ENCODE measurements at regions of chr5 and their contacts with region 1.

Region 1: DNA sequence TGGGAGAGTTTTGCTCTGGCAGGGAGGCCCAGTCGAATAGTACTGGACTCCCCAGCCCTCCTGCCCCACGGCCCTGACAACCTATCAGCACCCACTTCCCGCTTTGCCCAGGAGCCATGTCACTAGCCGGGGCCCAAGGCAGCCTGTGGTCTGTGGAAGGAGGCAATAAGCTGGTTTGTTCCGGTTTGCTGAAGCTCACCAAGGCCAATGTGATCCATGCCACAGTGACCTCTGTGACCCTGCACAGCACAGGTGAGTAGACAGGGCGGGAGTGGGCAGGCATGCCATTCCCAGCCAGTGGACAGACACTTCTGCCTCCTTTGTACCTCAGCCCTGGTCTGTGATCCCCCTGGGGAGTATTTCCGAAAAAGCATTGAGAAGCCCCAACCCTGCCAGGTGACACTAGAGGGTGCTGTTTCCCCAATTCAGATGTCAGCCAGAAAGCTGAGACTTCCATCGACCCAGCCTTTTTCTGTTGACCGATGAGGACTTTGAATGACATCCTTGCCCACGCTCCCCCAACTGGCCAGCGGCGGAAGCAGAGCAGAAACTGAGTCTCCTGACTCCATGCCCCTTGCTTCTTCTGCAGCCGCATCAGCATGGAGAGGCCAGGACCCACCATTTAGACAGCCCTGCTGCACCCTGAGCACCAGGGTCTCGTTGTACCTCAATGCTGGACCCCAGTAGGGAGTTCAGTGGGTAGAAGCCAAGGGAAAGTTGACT is 9.6 kb downstream of the PCYOX1L start:
- DNase-seq: no peak
- H3K4me3 ChIP-seq: no peak overlapping the region
- H3K27ac ChIP-seq: no peak overlapping the region
- H3K27me3 ChIP-seq: no peaks in the 10 kb centered on the region
- CTCF ChIP-seq: peak; percentile 93

Region 2: GRCh38 chr5:149284501-149284900 is 82.9 kb before region 1 on chr5:
- CTCF ChIA-PET with region 1: no interaction called
- POLR2A ChIA-PET with region 1: no interaction called
- DNase-seq: no peak
- H3K4me3 ChIP-seq: no peak overlapping the region
- H3K27ac ChIP-seq: no peak overlapping the region
- H3K27me3 ChIP-seq: no peaks in the 10 kb centered on the region
- CTCF ChIP-seq: no peak

Region 3: DNA sequence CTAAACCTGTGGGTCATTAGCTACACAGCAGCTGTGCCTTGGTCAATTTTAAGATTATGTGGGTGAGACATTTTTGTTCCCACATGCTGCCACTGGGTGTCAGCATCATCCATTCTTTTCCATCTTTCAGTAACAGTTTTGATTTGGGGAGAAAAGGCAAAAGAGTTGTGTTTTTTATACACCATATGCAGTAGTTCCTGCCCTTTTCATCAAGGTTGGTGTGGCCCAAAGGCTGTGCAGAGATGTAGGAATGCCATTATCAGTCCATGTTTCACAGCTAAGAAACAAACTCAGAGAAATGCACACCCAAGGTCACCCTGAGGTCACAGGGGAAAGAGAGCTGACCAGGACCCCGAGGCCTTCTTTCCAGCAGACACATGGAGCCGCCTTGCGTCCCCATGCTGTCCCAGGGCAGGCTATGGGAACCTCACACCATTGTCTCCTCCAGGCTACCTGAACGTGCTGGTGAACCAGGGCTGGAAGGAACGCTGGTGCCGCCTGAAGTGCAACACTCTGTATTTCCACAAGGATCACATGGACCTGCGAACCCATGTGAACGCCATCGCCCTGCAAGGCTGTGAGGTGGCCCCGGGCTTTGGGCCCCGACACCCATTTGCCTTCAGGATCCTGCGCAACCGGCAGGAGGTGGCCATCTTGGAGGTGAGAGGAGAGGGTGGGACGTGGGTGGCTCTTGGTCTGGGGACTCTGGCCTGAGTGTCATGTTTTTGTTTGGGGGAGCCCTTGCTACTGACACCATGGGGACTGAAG is 49.9 kb before region 1 on chr5:
- CTCF ChIA-PET with region 1: interaction called, 90 read pairs
- POLR2A ChIA-PET with region 1: interaction called, 3 read pairs
- DNase-seq: peak; percentile 33
- H3K4me3 ChIP-seq: no peak overlapping the region
- H3K27ac ChIP-seq: no peak overlapping the region
- H3K27me3 ChIP-seq: no peaks in the 10 kb centered on the region
- CTCF ChIP-seq: peak; percentile 75

Region 4: DNA sequence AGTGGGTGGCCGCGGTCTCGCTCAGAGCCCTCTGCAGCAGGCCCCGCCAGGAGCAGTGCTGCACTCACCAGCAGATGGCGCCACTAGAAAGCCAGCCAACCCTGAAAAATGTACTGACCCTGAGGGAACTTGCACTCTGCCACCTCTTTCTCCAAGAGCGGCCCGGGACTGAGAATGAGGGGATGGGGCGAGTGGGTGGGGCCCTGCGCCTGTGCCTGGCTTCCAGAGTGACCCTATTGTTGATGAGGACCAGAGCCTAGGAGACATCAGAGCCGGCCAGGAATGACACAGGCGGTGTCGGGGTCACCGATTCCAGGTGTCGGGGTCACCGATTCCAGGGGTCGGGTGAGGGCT is 14.6 kb after region 1 on chr5:
- CTCF ChIA-PET with region 1: interaction called, 41 read pairs
- POLR2A ChIA-PET with region 1: no interaction called
- DNase-seq: no peak
- H3K4me3 ChIP-seq: no peak overlapping the region
- H3K27ac ChIP-seq: no peak overlapping the region
- H3K27me3 ChIP-seq: no peaks in the 10 kb centered on the region
- CTCF ChIP-seq: peak; percentile 96

Region 5: DNA sequence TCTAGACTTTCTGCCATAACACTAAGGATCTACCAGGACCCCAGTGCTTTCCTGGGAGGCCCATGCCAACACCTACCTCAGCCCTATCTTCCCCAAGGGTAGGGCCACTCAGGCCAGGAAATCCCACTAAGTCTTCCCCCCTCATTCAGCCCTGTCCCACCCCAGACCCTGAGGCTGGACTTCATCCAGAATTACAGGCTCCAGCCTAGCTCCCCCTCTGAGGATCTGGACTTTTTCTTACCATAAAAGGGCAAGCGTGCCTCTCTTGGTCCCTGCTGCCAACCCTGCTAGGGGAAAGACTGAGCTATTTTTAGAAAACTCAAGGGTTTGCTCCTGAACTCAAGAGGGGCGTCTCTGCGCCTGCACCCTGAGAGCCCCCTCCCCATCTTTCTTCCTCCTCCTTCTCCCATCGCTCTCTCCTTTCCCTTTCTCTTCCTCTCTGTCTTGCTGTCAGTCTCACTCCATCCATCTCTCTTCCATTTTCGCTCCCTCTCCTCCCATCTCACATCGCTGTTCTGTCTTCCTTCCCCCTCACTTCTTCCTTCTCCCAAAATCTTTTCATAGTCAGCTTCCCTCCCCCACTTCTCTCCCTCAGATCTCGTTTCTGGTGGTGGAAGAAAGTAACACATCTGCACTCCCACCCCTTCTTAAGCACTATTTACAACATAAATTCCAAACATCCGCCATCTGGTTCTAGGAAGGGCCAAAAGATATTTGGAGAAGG is 49.7 kb after region 1 on chr5:
- CTCF ChIA-PET with region 1: interaction called, 12 read pairs
- POLR2A ChIA-PET with region 1: interaction called, 6 read pairs
- DNase-seq: peak; percentile 89
- H3K4me3 ChIP-seq: peak overlapping the region; percentile 25
- H3K27ac ChIP-seq: peak overlapping the region; percentile 98
- H3K27me3 ChIP-seq: no peaks in the 10 kb centered on the region
- CTCF ChIP-seq: no peak

Region 6: GRCh38 chr5:149442563-149443182 is 75.3 kb after region 1 on chr5:
- CTCF ChIA-PET with region 1: interaction called, 20 read pairs
- POLR2A ChIA-PET with region 1: no interaction called
- DNase-seq: peak; percentile 44
- H3K4me3 ChIP-seq: no peak overlapping the region
- H3K27ac ChIP-seq: peak overlapping the region; percentile 0
- H3K27me3 ChIP-seq: peaks cover 2% of the 10 kb centered on the region
- CTCF ChIP-seq: peak; percentile 93

Region 7: GRCh38 chr5:149567226-149567625 is 199.8 kb after region 1 on chr5:
- CTCF ChIA-PET with region 1: interaction called, 24 read pairs
- POLR2A ChIA-PET with region 1: no interaction called
- DNase-seq: no peak
- H3K4me3 ChIP-seq: no peak overlapping the region
- H3K27ac ChIP-seq: no peak overlapping the region
- H3K27me3 ChIP-seq: no peaks in the 10 kb centered on the region
- CTCF ChIP-seq: no peak

Measured in AG04450 (cell line).